ENCODE measurements at regions of chr6 and their contacts with region 1.

Region 1: GRCh38 chr6:125956506-125957390 is at the start of gene HINT3:
- DNase-seq: peak; percentile 99
- ATAC-seq: peak; percentile 86
- H3K4me3 Mint-ChIP-seq: no peak within 1 kb of the TSS
- H3K27ac Mint-ChIP-seq: no peak within 1 kb of the TSS
- H3K4me1 Mint-ChIP-seq: peaks cover 7% of the 10 kb centered on the region
- H3K27me3 Mint-ChIP-seq: peaks cover 4% of the 10 kb centered on the region
- CTCF ChIP-seq: peak; percentile 98
- total RNA-seq, gene HINT3: 8.5 to 8.6 TPM

Region 2: GRCh38 chr6:125700581-125701353 is 256.0 kb before region 1 on chr6:
- CTCF ChIA-PET with region 1: no interaction called
- POLR2A ChIA-PET with region 1: no interaction called
- intact Hi-C with region 1: no loop called
- DNase-seq: no peak
- ATAC-seq: no peak
- H3K4me3 Mint-ChIP-seq: no peak overlapping the region
- H3K27ac Mint-ChIP-seq: no peak overlapping the region
- H3K4me1 Mint-ChIP-seq: no peaks in the 10 kb centered on the region
- H3K27me3 Mint-ChIP-seq: peaks cover 5% of the 10 kb centered on the region
- CTCF ChIP-seq: no peak

Region 3: GRCh38 chr6:125779924-125780539 is 176.7 kb before region 1 on chr6:
- CTCF ChIA-PET with region 1: interaction called, 63 read pairs
- POLR2A ChIA-PET with region 1: interaction called, 23 read pairs
- intact Hi-C with region 1: loop called (anchors 2 kb)
- DNase-seq: peak; percentile 88
- ATAC-seq: peak; percentile 82
- H3K4me3 Mint-ChIP-seq: no peak overlapping the region
- H3K27ac Mint-ChIP-seq: no peak overlapping the region
- H3K4me1 Mint-ChIP-seq: peaks cover 16% of the 10 kb centered on the region
- H3K27me3 Mint-ChIP-seq: no peaks in the 10 kb centered on the region
- CTCF ChIP-seq: no peak

Region 4: GRCh38 chr6:125888989-125889656 is 67.6 kb before region 1 on chr6:
- CTCF ChIA-PET with region 1: interaction called, 17 read pairs
- POLR2A ChIA-PET with region 1: interaction called, 3 read pairs
- intact Hi-C with region 1: no loop called
- DNase-seq: peak; percentile 29
- ATAC-seq: no peak
- H3K4me3 Mint-ChIP-seq: no peak overlapping the region
- H3K27ac Mint-ChIP-seq: no peak overlapping the region
- H3K4me1 Mint-ChIP-seq: no peaks in the 10 kb centered on the region
- H3K27me3 Mint-ChIP-seq: no peaks in the 10 kb centered on the region
- CTCF ChIP-seq: peak; percentile 65

Region 5: GRCh38 chr6:125906158-125906998 is 50.4 kb before region 1 on chr6:
- CTCF ChIA-PET with region 1: interaction called, 37 read pairs
- POLR2A ChIA-PET with region 1: no interaction called
- intact Hi-C with region 1: no loop called
- DNase-seq: peak; percentile 57
- ATAC-seq: no peak
- H3K4me3 Mint-ChIP-seq: no peak overlapping the region
- H3K27ac Mint-ChIP-seq: no peak overlapping the region
- H3K4me1 Mint-ChIP-seq: peaks cover 38% of the 10 kb centered on the region
- H3K27me3 Mint-ChIP-seq: no peaks in the 10 kb centered on the region
- CTCF ChIP-seq: peak; percentile 83

Region 6: DNA sequence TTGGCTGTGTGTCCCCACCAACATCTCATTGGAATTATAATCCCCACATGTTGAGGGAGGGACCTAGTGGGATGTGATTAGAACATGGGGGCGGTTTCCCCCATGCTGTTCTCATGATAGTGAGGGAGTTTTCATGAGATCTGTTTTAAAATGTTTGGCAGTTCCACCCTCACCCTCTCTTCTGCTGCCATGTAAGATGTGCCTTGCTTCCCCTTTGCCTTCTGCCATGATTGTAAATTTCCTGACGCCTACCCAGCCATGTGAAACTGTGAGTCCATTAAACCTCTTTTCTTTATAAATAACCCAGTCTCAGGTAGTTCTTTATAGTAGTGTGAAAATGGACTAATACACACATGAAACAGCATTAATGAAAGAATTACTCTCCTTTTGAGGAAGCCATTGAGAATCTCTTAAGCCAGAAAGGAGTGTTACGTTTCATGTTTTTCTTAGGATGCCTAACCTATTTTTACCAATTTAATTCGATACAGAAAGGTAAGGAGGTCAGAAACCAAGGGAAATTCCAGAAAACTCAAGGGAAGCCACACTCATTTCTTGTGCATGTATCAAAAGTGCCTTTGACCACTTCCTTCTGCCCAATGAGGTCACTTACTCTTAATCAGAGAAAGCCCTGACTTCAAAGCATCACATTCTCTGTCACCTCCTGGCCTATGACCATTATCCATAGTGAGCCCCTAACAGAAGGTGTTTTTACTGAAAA is 24.9 kb before region 1 on chr6:
- CTCF ChIA-PET with region 1: interaction called, 14 read pairs
- POLR2A ChIA-PET with region 1: interaction called, 4 read pairs
- intact Hi-C with region 1: no loop called
- DNase-seq: peak; percentile 27
- ATAC-seq: peak; percentile 91
- H3K4me3 Mint-ChIP-seq: no peak overlapping the region
- H3K27ac Mint-ChIP-seq: peak overlapping the region; percentile 83
- H3K4me1 Mint-ChIP-seq: peaks cover 20% of the 10 kb centered on the region
- H3K27me3 Mint-ChIP-seq: peaks cover 2% of the 10 kb centered on the region
- CTCF ChIP-seq: no peak

Region 7: DNA sequence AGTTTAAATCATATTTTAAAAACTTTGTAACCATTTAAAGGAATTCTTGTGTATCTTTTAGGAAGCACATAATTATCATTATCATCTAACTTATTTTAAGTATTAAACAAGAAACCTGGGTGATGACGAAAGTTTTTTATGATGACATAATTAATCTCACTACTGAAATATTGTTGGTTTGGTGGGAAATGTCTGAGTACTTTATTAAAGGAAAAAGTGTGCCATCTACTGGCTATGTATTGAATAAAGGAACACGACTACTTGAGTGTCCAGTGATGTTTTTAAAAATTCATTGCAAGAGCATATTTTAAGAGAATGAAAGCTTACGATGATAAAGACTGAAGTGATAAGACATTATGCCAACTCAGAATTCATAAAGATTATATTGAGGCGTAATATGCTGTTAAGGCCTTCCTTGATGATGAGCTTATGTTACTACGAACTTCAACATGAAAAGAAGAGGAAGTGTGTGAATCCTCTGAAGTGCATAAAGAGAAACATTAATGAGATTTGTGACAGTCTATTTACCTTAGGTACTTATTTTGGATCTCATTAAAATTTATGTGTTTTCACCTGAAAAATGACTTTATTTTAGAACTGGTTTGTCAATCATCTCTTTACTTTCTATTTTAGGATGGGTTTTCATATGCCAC is 17.6 kb after region 1 on chr6:
- CTCF ChIA-PET with region 1: interaction called, 32 read pairs
- POLR2A ChIA-PET with region 1: interaction called, 3 read pairs
- intact Hi-C with region 1: no loop called
- DNase-seq: no peak
- ATAC-seq: peak; percentile 87
- H3K4me3 Mint-ChIP-seq: no peak overlapping the region
- H3K27ac Mint-ChIP-seq: peak overlapping the region; percentile 55
- H3K4me1 Mint-ChIP-seq: peaks cover 9% of the 10 kb centered on the region
- H3K27me3 Mint-ChIP-seq: no peaks in the 10 kb centered on the region
- CTCF ChIP-seq: peak; percentile 52

Region 8: DNA sequence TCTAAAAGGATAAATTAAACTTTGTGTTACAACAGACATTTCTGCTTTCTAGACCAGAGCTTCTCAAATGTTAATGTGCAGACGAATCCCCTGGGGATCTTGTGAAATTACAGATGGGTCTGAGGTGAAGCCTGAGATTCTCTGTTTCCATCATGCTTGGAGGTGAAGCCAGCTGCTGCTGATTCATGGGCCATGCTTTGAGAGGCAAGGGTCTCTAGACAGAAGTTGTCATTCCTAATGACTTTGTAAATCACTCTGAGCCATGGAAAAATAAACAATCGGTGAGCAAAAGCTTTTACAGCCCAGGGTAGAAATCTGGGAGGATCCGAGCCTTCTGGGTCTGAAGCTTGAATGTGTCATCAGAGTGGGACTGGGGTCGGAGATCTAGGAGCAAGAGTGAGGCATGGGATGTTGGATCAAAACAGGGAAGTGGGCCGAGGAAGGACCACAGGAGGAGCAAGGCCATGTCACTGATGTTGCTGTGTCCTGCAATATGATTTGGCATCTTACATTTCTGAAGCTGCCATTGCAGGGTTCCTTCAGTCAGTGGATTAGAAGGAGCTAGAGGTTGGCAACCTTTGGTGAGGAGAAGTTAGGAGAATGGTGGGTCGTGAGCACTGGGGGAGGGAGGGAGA is 106.9 kb after region 1 on chr6:
- CTCF ChIA-PET with region 1: no interaction called
- POLR2A ChIA-PET with region 1: no interaction called
- intact Hi-C with region 1: no loop called
- DNase-seq: no peak
- ATAC-seq: no peak
- H3K4me3 Mint-ChIP-seq: no peak overlapping the region
- H3K27ac Mint-ChIP-seq: no peak overlapping the region
- H3K4me1 Mint-ChIP-seq: no peaks in the 10 kb centered on the region
- H3K27me3 Mint-ChIP-seq: no peaks in the 10 kb centered on the region
- CTCF ChIP-seq: no peak

Measured in activated CD8-positive, alpha-beta T cell treated with anti-CD3 and anti-CD28 coated beads for 36 hours (primary cell).